Ascending aorta (tissue), 2 donors: ENCODE measurements at regions of chr7 and their contacts with region 1.

Region 1: DNA sequence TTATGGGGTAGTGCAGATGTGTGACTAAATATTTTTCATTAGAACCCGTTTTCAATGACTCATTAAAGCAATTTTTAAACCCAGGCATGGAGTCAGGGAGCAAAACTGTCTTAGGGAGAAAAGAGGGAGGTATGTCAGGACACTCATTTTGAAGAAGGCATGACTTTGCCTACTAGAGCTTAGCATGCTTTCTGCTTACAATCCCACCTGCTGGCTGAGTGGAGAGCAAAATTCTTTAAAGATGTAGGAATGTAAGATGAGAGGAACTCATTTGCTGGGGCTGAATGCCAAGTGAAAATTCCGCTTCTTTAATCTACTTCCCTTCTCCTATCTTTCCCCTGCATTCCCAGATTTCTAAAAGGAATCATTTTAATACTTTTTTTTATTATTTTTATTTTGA is 232.6 kb downstream of the GALNT17 start:
- DNase-seq: no peak
- H3K4me3 ChIP-seq: no peak overlapping the region
- H3K27ac ChIP-seq: no peak overlapping the region
- H3K4me1 ChIP-seq: no peaks in the 10 kb centered on the region
- H3K27me3 ChIP-seq: no peaks in the 10 kb centered on the region
- CTCF ChIP-seq: no peak

Region 2: DNA sequence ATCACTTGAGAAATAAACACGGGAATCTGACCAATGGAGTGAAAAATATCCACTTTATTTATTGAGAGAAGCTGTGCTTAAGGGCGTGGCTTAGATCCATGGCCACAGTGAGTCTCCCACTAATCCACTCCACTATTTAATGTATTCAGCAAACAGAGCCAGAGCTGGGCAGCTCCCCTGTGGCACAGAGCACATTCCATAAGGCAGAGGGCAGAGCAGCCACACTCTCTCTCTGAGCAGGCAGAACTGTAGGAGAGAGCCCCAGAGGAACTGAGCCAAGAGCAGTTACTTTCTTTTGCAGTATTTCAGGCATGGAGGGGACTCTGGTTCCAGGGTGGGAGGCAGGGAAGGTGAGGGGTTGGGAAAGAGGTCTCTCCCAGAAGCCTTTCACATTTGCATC is 126.6 kb before region 1 on chr7:
- intact Hi-C with region 1: loop called (anchors 5 kb)
- DNase-seq: peak in 1 of 2 donors; percentile 72
- H3K4me3 ChIP-seq: no peak overlapping the region
- H3K27ac ChIP-seq: peak overlapping the region; percentile 79 to 84
- H3K4me1 ChIP-seq: peaks cover 0 to 21% of the 10 kb centered on the region in 2 donors
- H3K27me3 ChIP-seq: no peaks in the 10 kb centered on the region
- CTCF ChIP-seq: peak in 2 of 3 experiments; percentile 49 to 59